ENCODE measurements at regions of chr5 and their contacts with region 1.

Region 1: GRCh38 chr5:150449517-150450339 is at the start of gene RPS14:
- DNase-seq: peak; percentile 87
- ATAC-seq: peak; percentile 96
- H3K4me3 ChIP-seq: peak within 1 kb of the TSS; percentile 86 to 93 (median 90)
- H3K27ac ChIP-seq: peak within 1 kb of the TSS; percentile 95
- H3K4me1 ChIP-seq: peaks cover 33% of the 10 kb centered on the region
- H3K27me3 ChIP-seq: no peaks in the 10 kb centered on the region; a peak in 1 of 5 replicates
- CTCF ChIP-seq: peak; percentile 92
- EP300 ChIP-seq: no peak
- POLR2A ChIP-seq: peak; percentile 92 to 96
- RAD21 ChIP-seq: peak; percentile 42; the same call in 1 of the 2 replicates
- total RNA-seq, gene RPS14: 2,116 and 2,466 TPM in 2 replicates

Region 2: GRCh38 chr5:150295172-150295634 is 154.5 kb before region 1 on chr5:
- CTCF ChIA-PET with region 1: no interaction called
- POLR2A ChIA-PET with region 1: no interaction called
- in situ Hi-C with region 1: loop called (anchors 10 kb)
- intact Hi-C with region 1: no loop called
- DNase-seq: peak; percentile 60
- ATAC-seq: peak; percentile 80
- H3K4me3 ChIP-seq: peak overlapping the region in 1 of 3 experiments; percentile 50; a peak in 1 of 6 replicates
- H3K27ac ChIP-seq: no peak overlapping the region
- H3K4me1 ChIP-seq: peaks cover 30% of the 10 kb centered on the region
- H3K27me3 ChIP-seq: no peaks in the 10 kb centered on the region
- CTCF ChIP-seq: no peak
- EP300 ChIP-seq: no peak
- POLR2A ChIP-seq: no peak
- RAD21 ChIP-seq: no peak

Region 3: DNA sequence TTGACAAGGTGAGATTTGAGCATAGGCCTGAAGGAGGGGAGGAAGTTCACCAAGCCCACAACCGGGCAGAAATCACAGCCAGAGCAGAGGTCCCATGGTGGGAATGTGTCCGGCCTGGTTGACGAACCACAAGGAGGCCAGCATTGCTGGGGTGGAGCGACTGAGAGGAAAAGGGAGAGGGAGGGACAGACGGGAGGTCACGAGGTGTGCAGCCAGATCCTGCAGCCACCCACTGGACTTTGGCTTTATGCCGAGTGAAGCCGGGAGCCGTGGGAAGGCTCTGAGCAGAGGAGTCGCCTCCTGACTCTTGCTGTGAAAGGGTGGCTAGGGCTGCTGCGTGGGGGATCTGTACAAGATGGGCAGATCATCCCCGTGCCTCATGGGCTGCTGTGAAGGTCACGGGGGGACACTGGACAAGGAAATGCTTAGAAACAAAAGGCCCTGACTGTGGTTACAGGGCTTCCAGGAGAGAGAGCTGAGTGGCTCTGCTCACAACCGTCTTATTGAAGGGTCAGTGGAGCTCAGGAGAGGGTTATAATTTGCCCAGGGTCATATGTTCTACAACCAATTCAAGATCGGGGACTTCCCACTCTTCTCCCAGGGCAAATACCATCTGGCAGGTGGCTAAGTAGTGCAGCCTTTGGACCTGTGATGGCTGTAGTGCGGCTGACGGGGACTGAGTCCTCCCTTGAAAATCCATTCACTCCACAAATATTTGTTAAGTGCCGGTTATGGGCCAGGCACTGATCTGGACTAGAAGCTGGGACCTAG is 21.4 kb before region 1 on chr5:
- CTCF ChIA-PET with region 1: no interaction called
- POLR2A ChIA-PET with region 1: interaction called, 12 read pairs
- in situ Hi-C with region 1: no loop called
- intact Hi-C with region 1: no loop called
- DNase-seq: peak; percentile 83
- ATAC-seq: peak; percentile 90
- H3K4me3 ChIP-seq: peak overlapping the region; percentile 49 to 71 (median 56)
- H3K27ac ChIP-seq: peak overlapping the region; percentile 89
- H3K4me1 ChIP-seq: peaks cover 45% of the 10 kb centered on the region
- H3K27me3 ChIP-seq: no peaks in the 10 kb centered on the region; a peak in 1 of 5 replicates
- CTCF ChIP-seq: no peak
- EP300 ChIP-seq: no peak
- POLR2A ChIP-seq: peak; percentile 81 to 85
- RAD21 ChIP-seq: peak; percentile 39; the same call in 1 of the 2 replicates

Region 4: DNA sequence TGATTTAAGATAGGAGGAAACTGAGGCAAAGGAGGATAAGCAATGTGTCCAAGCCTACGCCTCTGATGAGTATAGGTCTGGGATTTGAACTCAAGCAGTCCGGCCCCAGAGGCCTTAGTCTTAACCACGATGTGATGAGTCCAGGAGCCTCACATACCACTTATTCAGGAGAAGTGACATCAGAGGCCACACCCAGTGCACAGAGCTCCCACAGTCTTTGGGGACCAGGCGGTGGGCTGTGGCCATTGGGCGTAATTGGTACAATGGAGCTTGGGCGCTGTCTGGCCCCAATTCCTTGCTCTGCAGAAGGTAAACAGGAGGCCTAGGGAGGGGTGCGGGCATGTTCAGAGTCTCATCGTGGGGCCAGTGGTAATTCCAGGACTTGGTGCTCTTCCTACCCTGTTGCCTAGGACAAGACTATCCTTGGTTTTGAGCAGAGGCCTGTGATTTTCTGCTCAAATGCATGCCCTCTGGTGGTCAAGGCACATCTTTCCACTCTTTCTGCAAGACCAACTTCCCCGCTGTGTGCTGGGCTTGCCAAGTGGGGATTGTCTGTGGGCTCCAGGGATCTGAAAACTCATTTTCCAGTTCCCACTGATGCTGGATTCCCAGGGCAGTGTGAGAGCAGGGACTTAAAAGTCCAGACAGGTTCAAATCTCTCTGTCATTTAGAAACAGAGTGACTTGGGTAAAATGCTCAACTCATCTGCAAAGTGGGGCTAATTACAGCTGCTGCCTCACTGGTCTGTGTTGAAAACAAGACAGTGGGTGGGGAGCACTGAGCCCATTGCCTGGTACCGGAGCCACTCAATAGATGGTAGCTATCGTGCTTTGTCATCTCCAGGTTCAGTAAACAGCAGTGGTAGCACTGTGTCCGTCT is 74.0 kb after region 1 on chr5:
- CTCF ChIA-PET with region 1: no interaction called
- POLR2A ChIA-PET with region 1: interaction called, 22 read pairs
- in situ Hi-C with region 1: no loop called
- intact Hi-C with region 1: no loop called
- DNase-seq: peak; percentile 73
- ATAC-seq: peak; percentile 28
- H3K4me3 ChIP-seq: no peak overlapping the region
- H3K27ac ChIP-seq: peak overlapping the region; percentile 84
- H3K4me1 ChIP-seq: peaks cover 77% of the 10 kb centered on the region
- H3K27me3 ChIP-seq: no peaks in the 10 kb centered on the region
- CTCF ChIP-seq: peak; percentile 69
- EP300 ChIP-seq: no peak
- POLR2A ChIP-seq: no peak
- RAD21 ChIP-seq: peak; percentile 74

Region 5: GRCh38 chr5:150656191-150657132 is 206.7 kb after region 1 on chr5:
- CTCF ChIA-PET with region 1: no interaction called
- POLR2A ChIA-PET with region 1: no interaction called
- in situ Hi-C with region 1: loop called (anchors 25 kb)
- intact Hi-C with region 1: no loop called
- DNase-seq: peak; percentile 35
- ATAC-seq: peak; percentile 61
- H3K4me3 ChIP-seq: peak overlapping the region; percentile 49 to 75 (median 60)
- H3K27ac ChIP-seq: no peak overlapping the region
- H3K4me1 ChIP-seq: peaks cover 18% of the 10 kb centered on the region
- H3K27me3 ChIP-seq: peaks cover 2 to 21% of the 10 kb centered on the region in 2 experiments; a peak in 2 of 5 replicates
- CTCF ChIP-seq: peak; percentile 78
- EP300 ChIP-seq: no peak
- POLR2A ChIP-seq: no peak
- RAD21 ChIP-seq: peak; percentile 87

Measured in HepG2 (cell line).